Activated T-helper 1 cell treated with anti-CD3 and anti-CD28 coated beads, Interleukin-12 subunit alpha, Interleukin-12 subunit beta, Interleukin-2, Interleukin-4 antibody, amounts not matched to agents 30 ng/mL and 10 ng/mL and 1 ng/mL, durations not matched to agents 14 hours and 24 hours and 36 hours (primary cell): ENCODE measurements at regions of chr2 and their contacts with region 1.

Region 1: GRCh38 chr2:30336978-30337841 is 105.9 kb downstream of the LBH start:
- DNase-seq: peak; percentile 60
- H3K4me3 Mint-ChIP-seq: peak overlapping the region; percentile 64
- H3K27ac Mint-ChIP-seq: peak overlapping the region; percentile 94
- H3K4me1 Mint-ChIP-seq: peaks cover 76% of the 10 kb centered on the region
- H3K27me3 Mint-ChIP-seq: no peaks in the 10 kb centered on the region

Region 2: GRCh38 chr2:30266051-30266621 is 71.1 kb before region 1 on chr2:
- intact Hi-C with region 1: loop called (anchors 1 kb)
- DNase-seq: peak; percentile 51
- H3K4me3 Mint-ChIP-seq: peak overlapping the region; percentile 84
- H3K27ac Mint-ChIP-seq: peak overlapping the region; percentile 97
- H3K4me1 Mint-ChIP-seq: peaks cover 82% of the 10 kb centered on the region
- H3K27me3 Mint-ChIP-seq: no peaks in the 10 kb centered on the region

Region 3: GRCh38 chr2:30298302-30298701 is 38.9 kb before region 1 on chr2:
- intact Hi-C with region 1: loop called (anchors 5 kb)
- DNase-seq: no peak
- H3K4me3 Mint-ChIP-seq: no peak overlapping the region
- H3K27ac Mint-ChIP-seq: peak overlapping the region; percentile 80
- H3K4me1 Mint-ChIP-seq: peaks cover 26% of the 10 kb centered on the region
- H3K27me3 Mint-ChIP-seq: peaks cover 3% of the 10 kb centered on the region

Region 4: DNA sequence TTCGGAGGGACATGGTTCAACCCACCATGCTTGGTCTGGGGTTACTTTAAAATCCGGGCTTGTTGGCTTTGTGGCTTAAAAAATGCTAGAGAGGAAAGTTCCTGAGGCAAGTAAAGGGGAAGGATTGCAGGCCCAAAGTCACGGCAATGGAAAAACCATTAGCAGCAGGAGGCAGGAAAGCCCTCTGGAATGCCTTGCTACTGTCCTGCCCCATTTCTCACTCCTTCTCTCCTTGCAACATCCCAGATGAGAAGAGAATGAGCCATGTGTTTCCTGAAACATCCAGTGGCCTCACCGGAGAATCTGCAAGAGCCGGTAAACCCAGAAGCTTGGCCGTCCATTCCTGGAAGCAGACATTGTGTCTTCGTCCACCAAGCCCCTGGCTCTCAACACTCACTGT is 12.5 kb after region 1 on chr2:
- intact Hi-C with region 1: loop called (anchors 1 kb)
- DNase-seq: no peak
- H3K4me3 Mint-ChIP-seq: no peak overlapping the region
- H3K27ac Mint-ChIP-seq: peak overlapping the region; percentile 63
- H3K4me1 Mint-ChIP-seq: peaks cover 31% of the 10 kb centered on the region
- H3K27me3 Mint-ChIP-seq: no peaks in the 10 kb centered on the region

Region 5: GRCh38 chr2:30373881-30374302 is 36.7 kb after region 1 on chr2:
- intact Hi-C with region 1: loop called (anchors 1 kb)
- DNase-seq: no peak
- H3K4me3 Mint-ChIP-seq: no peak overlapping the region
- H3K27ac Mint-ChIP-seq: peak overlapping the region; percentile 49
- H3K4me1 Mint-ChIP-seq: peaks cover 35% of the 10 kb centered on the region
- H3K27me3 Mint-ChIP-seq: no peaks in the 10 kb centered on the region

Region 6: GRCh38 chr2:30398084-30398873 is 61.1 kb after region 1 on chr2:
- intact Hi-C with region 1: no loop called
- DNase-seq: no peak
- H3K4me3 Mint-ChIP-seq: no peak overlapping the region
- H3K27ac Mint-ChIP-seq: no peak overlapping the region
- H3K4me1 Mint-ChIP-seq: no peaks in the 10 kb centered on the region
- H3K27me3 Mint-ChIP-seq: no peaks in the 10 kb centered on the region

Region 7: DNA sequence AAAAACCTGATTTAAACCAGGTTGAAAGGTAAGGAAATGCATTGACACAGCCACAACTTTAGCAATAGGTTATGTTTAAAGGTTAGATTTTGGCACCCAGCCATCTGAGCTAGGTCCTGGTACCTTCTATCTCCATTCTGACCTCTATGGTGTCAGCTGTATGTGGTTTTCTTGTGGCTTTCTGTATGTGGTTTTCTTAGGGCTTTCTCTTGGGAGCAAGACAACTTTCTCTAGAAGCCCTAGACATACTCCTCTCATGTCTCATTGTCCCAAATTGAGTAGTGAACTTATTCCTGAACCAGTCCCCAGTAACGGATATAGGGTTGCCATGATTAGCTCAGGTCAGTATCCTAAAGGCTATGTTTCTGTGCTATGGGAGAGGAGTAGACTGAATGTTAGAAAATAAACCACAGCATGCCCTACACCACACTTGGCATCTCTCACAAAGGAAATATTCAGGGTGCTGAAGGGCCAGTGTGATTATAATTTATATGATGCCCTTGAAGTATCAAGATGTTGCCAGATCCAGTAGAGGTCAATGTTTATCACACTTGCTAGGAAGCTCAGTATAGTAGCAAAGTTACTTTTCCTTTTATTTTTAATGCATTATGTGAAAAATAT is 294.0 kb after region 1 on chr2:
- intact Hi-C with region 1: loop called (anchors 5 kb)
- DNase-seq: no peak
- H3K4me3 Mint-ChIP-seq: no peak overlapping the region
- H3K27ac Mint-ChIP-seq: no peak overlapping the region
- H3K4me1 Mint-ChIP-seq: peaks cover 18% of the 10 kb centered on the region
- H3K27me3 Mint-ChIP-seq: no peaks in the 10 kb centered on the region

Region 8: DNA sequence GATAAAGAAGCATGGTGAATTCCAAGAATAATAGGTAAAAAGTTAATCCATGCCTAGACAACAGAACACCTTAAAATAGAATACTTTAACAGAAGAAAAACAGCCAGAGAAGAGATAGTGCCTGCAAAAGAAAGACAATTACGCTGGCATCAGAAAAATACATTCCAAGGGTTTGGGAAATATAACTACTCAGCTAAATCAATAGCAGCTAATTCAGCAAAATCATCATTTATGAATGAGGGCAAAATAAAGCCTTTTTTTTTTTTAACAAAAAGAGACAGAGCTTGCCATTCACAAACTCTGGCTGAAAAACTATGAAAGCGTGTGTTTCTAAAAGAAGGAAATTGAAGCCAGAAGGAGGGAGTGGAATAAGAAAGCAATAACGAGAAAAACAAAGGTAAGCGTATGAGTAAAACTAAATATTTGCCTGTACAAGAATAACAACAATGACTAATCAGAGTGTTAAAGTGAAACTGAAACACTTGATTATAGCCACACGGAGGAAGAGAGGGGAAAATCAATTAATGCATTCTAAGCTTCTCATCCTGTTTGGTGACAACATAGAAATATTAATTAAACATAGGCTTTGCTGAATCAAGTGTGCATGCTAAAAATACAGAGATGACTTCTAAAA is 986.9 kb after region 1 on chr2:
- intact Hi-C with region 1: loop called (anchors 2 kb)
- DNase-seq: no peak
- H3K4me3 Mint-ChIP-seq: peak overlapping the region; percentile 56
- H3K27ac Mint-ChIP-seq: peak overlapping the region; percentile 66
- H3K4me1 Mint-ChIP-seq: peaks cover 52% of the 10 kb centered on the region
- H3K27me3 Mint-ChIP-seq: peaks cover 6% of the 10 kb centered on the region